B cell (primary cell): ENCODE measurements at regions of chr4 and their contacts with region 1.

Region 1: DNA sequence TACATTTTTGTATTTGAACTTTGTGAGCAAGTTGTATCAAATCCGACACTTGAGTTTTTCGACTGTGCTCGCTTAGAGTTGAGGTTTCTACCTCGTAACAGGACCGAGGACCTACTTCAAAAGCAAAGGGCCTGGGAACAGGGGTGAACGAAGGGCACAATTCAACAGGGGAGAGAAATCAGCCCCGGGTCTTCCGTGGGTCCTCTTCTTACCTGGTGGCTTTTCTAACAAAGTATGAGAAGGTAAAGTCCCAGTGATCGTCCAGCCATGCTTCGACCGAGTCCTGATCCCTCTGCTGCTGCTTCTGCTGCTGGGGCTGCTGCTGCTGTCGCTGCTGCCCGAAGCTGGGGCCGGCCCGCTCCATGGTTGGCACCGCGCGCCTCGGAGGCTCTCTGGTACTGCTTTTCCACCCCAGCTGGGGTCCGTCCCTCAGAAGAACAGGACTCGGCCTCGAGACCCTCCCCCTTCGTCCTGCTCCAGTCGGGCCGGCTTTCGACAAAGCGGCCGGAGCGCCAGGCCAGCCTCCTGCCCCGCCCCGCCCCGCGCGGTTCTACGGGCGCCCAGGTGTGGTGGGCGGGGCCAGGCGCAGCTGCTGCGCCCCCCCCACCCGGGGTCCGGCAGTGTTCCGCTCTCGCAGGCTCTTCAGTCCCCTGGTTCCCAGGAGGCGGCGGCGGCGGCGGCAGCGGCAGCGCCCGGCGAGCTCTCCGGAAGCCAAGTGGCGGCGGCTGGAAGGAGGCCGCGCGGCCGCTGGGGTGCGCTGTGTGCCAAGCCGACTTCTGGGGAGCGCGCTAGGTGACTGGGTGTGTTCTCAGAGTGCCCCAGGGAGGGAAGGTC is at the start of gene PDE5A:
- DNase-seq: peak; percentile 86
- ATAC-seq: peak; percentile 80
- H3K4me3 ChIP-seq: peak within 1 kb of the TSS; percentile 42 to 77 (median 63)
- H3K4me3 Mint-ChIP-seq: peak within 1 kb of the TSS; percentile 87
- H3K27ac ChIP-seq: peak within 1 kb of the TSS; percentile 40 to 51
- H3K27ac Mint-ChIP-seq: peak within 1 kb of the TSS; percentile 47
- H3K4me1 ChIP-seq: peaks cover 18 to 26% of the 10 kb centered on the region in 2 donors
- H3K4me1 Mint-ChIP-seq: peaks cover 26% of the 10 kb centered on the region
- H3K27me3 ChIP-seq: peaks cover 0 to 26% (median 11%) of the 10 kb centered on the region in 4 experiments
- H3K27me3 Mint-ChIP-seq: peaks cover 14% of the 10 kb centered on the region
- CTCF ChIP-seq: peak; percentile 78
- total RNA-seq, gene PDE5A: 1.4 and 2.6 TPM in 2 replicates

Region 2: GRCh38 chr4:118760493-118760892 is 868.0 kb before region 1 on chr4:
- CTCF ChIA-PET with region 1: no interaction called
- POLR2A ChIA-PET with region 1: no interaction called
- intact Hi-C with region 1: loop called (anchors 5 kb)
- DNase-seq: peak; percentile 72
- ATAC-seq: peak; percentile 94
- H3K4me3 ChIP-seq: no peak overlapping the region
- H3K4me3 Mint-ChIP-seq: peak overlapping the region; percentile 17
- H3K27ac ChIP-seq: no peak overlapping the region
- H3K27ac Mint-ChIP-seq: peak overlapping the region; percentile 65
- H3K4me1 ChIP-seq: peaks cover 14 to 19% of the 10 kb centered on the region in 2 donors
- H3K4me1 Mint-ChIP-seq: peaks cover 26% of the 10 kb centered on the region
- H3K27me3 ChIP-seq: no peaks in the 10 kb centered on the region
- H3K27me3 Mint-ChIP-seq: no peaks in the 10 kb centered on the region
- CTCF ChIP-seq: no peak

Region 3: GRCh38 chr4:119300101-119300978 is 328.2 kb before region 1 on chr4:
- CTCF ChIA-PET with region 1: interaction called, 3 read pairs
- POLR2A ChIA-PET with region 1: interaction called, 5 read pairs
- intact Hi-C with region 1: loop called (anchors 5 kb)
- DNase-seq: peak; percentile 95
- ATAC-seq: peak; percentile 93
- H3K4me3 ChIP-seq: peak overlapping the region; percentile 87 to 97 (median 94)
- H3K4me3 Mint-ChIP-seq: peak overlapping the region; percentile 92
- H3K27ac ChIP-seq: peak overlapping the region; percentile 91 to 92
- H3K27ac Mint-ChIP-seq: peak overlapping the region; percentile 95
- H3K4me1 ChIP-seq: peaks cover 17 to 21% of the 10 kb centered on the region in 2 donors
- H3K4me1 Mint-ChIP-seq: peaks cover 30% of the 10 kb centered on the region
- H3K27me3 ChIP-seq: no peaks in the 10 kb centered on the region
- H3K27me3 Mint-ChIP-seq: peaks cover 5% of the 10 kb centered on the region
- CTCF ChIP-seq: no peak